ENCODE measurements at regions of chr6 and their contacts with region 1.

Region 1: GRCh38 chr6:158387036-158387435 is 74.8 kb downstream of the TULP4 start:
- DNase-seq: no peak
- ATAC-seq: no peak; the same call in 1 of the 2 replicates
- H3K4me3 ChIP-seq: no peak overlapping the region
- H3K27ac ChIP-seq: no peak overlapping the region
- H3K4me1 ChIP-seq: no peaks in the 10 kb centered on the region
- H3K27me3 ChIP-seq: no peaks in the 10 kb centered on the region
- CTCF ChIP-seq: peak; percentile 40; the same call in 1 of the 2 replicates

Region 2: DNA sequence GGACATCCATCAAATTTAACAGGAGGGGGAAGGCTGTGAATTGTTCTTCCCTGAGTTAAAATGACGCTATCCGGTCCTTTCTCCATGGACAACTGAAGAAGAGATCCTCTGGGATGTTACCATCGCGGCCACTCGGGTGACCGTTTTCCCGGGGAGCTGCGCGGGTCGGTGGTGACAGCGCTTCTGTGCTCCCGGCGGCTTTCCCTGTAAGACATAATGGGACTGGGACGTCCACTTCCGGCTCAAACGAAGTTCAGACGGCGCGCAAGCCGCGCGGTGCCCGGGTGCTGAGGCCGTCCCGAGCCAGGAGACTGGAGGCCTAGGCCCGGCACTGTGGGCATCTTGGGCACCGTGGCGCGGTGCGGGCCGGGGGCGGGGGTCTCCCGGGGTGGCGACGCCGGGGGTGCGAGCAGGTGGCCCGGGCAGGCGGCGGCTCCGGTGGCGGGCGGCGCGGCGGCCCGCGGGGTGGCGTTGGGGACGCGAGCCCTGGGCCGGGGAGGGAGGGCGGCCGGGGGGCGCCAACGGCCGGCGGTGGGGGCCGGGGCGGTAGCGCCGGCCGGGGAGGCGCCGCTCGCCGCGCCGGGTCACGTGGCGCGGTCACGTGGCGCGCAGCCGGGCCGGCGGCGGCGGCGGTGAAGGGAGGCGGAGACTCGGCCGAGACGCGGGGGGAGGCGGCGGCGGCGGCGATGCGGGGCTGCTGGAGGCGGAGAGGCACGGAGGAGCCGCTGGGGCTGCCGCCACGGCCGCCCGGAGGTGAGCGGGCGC is 155.3 kb before region 1 on chr6:
- CTCF ChIA-PET with region 1: no interaction called
- POLR2A ChIA-PET with region 1: no interaction called
- intact Hi-C with region 1: loop called (anchors 10 kb)
- DNase-seq: peak; percentile 60
- ATAC-seq: peak; percentile 66
- H3K4me3 ChIP-seq: peak overlapping the region; percentile 78
- H3K27ac ChIP-seq: peak overlapping the region; percentile 40
- H3K4me1 ChIP-seq: peaks cover 12% of the 10 kb centered on the region; the same call in 1 of the 2 replicates
- H3K27me3 ChIP-seq: no peaks in the 10 kb centered on the region
- CTCF ChIP-seq: no peak

Region 3: DNA sequence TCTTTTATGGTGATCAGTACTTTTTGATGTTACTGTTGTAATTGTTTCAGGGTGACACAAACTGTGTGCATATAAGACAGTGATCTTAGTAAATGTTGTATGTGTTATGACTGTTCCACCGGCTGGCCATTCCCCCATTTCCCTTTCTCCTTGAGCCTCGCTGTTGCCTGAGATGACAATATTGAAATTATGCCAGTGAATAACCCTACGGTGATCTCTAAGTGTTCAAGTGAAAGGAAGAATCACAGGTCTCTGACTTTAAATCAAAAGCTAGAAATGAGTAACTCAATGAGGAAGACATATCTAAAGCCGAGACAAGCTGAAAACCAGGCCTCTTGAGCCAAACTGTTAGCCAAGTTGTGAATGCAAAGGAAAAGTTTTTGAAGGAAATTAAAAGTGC is 42.5 kb before region 1 on chr6:
- CTCF ChIA-PET with region 1: no interaction called
- POLR2A ChIA-PET with region 1: no interaction called
- intact Hi-C with region 1: loop called (anchors 5 kb)
- DNase-seq: no peak
- ATAC-seq: no peak
- H3K4me3 ChIP-seq: no peak overlapping the region
- H3K27ac ChIP-seq: no peak overlapping the region
- H3K4me1 ChIP-seq: peaks cover 4% of the 10 kb centered on the region; the same call in 1 of the 2 replicates
- H3K27me3 ChIP-seq: no peaks in the 10 kb centered on the region
- CTCF ChIP-seq: no peak

Region 4: DNA sequence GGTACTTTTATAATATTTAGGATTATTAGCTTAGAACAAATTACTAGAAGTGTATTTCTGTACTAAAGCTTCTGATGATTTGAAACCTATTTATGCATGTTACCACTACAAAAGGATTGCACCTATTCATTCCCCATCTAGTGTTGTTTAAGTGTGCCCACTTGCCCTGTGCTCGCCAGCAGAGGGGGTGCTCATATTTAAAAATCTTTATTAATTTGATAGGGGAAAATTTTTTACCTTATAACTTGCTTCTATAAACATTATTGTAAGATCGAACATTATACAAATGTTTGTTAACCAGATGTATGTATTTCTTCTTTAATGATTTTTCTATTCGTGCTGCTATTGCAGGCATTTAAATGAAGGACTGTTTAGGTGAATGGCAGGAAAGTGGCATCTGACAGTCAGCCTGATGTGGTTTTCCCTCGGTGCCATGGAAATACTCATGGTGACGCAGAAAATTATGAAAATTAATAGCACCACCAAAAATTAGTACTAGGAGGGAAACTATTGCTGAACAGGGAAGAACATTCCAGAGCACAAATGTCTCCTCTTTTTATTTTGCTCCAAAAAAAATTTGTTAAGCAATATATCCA is 738.1 kb after region 1 on chr6:
- CTCF ChIA-PET with region 1: no interaction called
- POLR2A ChIA-PET with region 1: no interaction called
- intact Hi-C with region 1: no loop called
- DNase-seq: peak; percentile 10
- ATAC-seq: no peak
- H3K4me3 ChIP-seq: no peak overlapping the region
- H3K27ac ChIP-seq: no peak overlapping the region
- H3K4me1 ChIP-seq: no peaks in the 10 kb centered on the region
- H3K27me3 ChIP-seq: peaks cover 8% of the 10 kb centered on the region
- CTCF ChIP-seq: peak; percentile 53